ENCODE measurements at regions of chr12 and their contacts with region 1.

Region 1: GRCh38 chr12:55738123-55739024 is 4.5 kb upstream of the GDF11 start:
- DNase-seq: peak; percentile 87 to 89
- H3K4me3 ChIP-seq: peak overlapping the region; percentile 52 to 67
- H3K27ac ChIP-seq: peak overlapping the region; percentile 71 to 73
- H3K4me1 ChIP-seq: peaks cover 0 to 19% (median 14%) of the 10 kb centered on the region in 4 donors
- H3K27me3 ChIP-seq: no peaks in the 10 kb centered on the region
- CTCF ChIP-seq: peak; percentile 86 to 96

Region 2: GRCh38 chr12:55681142-55682077 is 57.0 kb before region 1 on chr12:
- intact Hi-C with region 1: loop called (anchors 5 kb)
- DNase-seq: peak; percentile 35 to 76
- H3K4me3 ChIP-seq: peak overlapping the region; percentile 4 to 5
- H3K27ac ChIP-seq: peak overlapping the region; percentile 23 to 49
- H3K4me1 ChIP-seq: peaks cover 0 to 15% (median 11%) of the 10 kb centered on the region in 4 donors
- H3K27me3 ChIP-seq: no peaks in the 10 kb centered on the region
- CTCF ChIP-seq: peak; percentile 29 to 36

Region 3: DNA sequence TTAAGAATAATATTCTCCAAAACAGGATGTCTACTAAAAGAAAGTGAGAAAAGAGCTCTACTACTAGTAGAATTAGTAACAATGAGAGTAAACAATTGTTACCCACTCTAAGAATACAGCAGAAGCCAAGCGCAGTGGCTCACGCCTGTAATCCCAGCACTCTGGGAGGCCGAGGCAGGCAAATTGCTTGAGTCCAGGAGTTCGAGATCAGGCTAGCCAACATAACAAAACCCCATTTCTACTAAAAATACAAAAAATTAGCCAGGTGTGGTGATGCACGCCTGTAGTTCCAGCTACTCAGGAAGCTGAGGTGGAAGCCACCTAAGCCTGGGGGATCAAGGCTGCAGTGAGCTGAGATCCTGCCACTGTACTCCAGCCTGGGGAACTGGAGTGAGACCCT is 86.4 kb after region 1 on chr12:
- intact Hi-C with region 1: loop called (anchors 2 kb)
- DNase-seq: no peak
- H3K4me3 ChIP-seq: no peak overlapping the region
- H3K27ac ChIP-seq: no peak overlapping the region
- H3K4me1 ChIP-seq: peaks cover 0 to 41% (median 27%) of the 10 kb centered on the region in 4 donors
- H3K27me3 ChIP-seq: no peaks in the 10 kb centered on the region
- CTCF ChIP-seq: no peak

Region 4: DNA sequence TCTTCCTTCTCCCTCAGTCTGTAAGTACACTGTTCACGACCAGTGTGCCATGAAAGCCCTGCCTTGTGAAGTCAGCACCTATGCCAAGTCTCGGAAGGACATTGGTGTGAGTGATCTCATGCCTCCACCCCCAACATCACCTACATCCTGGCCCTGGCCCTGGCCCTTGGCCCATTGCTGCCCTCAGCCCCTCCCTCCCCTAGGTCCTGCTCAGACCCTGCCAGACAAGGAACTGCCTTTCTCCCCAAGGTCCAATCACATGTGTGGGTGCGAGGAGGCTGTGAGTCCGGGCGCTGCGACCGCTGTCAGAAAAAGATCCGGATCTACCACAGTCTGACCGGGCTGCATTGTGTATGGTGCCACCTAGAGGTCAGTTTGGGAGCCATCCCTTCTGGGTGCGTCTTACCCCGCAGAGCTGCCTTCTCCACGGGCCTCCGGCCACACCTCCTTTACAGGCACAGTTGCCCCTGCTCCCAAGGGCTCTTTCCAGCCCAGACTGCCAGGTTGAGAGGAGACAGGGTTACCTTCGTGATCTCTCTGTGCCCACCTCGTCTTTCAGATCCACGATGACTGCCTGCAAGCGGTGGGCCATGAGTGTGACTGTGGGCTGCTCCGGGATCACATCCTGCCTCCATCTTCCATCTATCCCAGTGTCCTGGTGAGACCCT is 201.8 kb after region 1 on chr12:
- intact Hi-C with region 1: loop called (anchors 2 kb)
- DNase-seq: peak; percentile 85 to 90
- H3K4me3 ChIP-seq: peak overlapping the region; percentile 24 to 36
- H3K27ac ChIP-seq: peak overlapping the region; percentile 37 to 48
- H3K4me1 ChIP-seq: peaks cover 0 to 7% (median 5%) of the 10 kb centered on the region in 4 donors
- H3K27me3 ChIP-seq: no peaks in the 10 kb centered on the region
- CTCF ChIP-seq: peak; percentile 84 to 85